Right lobe of liver (tissue), 6 donors: ENCODE measurements at regions of chr14 and their contacts with region 1.

Region 1: DNA sequence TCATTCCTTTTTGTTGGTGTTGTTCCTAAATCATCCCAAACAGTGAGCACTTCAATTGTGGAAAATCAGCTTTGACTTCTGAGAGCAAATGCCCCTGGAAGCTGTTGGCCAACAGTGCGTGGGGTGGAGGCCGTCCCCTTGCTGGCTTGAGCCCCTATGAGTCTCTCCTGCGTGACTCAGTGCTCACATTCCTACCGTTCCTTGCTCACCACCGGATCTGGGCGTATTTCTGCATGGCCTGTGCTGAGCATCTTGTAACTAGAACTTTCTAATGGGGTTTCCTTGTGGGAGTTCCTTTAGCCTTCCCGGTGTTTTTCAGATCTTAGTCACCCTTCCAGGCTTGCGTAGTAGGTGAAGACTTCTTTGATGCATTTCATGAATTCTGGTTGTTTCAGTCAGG is 14.7 kb downstream of the SERPINA1 start:
- DNase-seq: no peak
- ATAC-seq: no peak
- H3K4me3 ChIP-seq: no peak overlapping the region
- H3K27ac ChIP-seq: no peak overlapping the region
- H3K4me1 ChIP-seq: no peaks in the 10 kb centered on the region
- H3K27me3 ChIP-seq: no peaks in the 10 kb centered on the region
- CTCF ChIP-seq: no peak
- POLR2A ChIP-seq: no peak

Region 2: DNA sequence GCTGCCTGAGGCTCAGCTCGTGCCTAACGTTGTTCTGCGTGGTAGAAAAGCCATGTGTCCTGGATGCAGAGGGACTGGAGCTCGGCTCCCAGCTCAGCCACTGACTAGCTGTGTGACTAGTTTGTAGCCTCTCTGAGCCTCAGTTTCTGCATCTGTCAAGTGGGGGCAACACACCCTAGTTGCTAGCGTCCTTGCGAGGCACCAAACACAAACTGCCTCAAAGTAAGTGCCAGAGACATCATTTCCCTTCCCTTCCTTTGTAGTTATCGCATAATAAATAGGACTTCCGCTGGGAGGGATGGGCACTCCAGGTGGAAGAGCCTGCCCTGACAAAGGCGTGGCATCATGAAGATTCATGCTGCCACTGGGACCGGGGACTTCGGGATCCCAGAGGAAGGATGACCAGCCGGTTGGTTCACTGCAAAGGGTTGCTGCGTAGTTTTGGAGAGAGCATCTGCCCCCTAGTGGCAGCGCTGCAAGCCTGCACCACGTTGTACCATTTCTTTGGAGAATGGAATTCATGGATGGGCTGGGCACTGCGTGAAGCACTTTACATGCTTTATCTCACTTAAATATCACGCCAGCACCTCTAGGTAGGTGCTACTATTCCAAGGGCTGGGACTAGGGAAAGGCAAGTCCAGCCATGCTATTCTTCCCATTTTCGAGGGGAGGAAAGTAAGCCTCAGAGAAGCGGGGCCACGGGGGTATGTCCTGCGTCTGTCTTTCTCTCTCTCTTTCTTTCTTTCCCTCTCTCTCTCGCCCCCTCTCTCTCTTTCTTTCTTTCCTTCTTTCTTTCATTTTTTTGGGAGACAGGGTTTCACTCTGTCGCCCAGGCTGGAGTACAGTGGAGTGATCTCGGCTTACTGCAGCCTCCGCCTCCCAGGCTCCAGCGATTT is 372.0 kb before region 1 on chr14:
- intact Hi-C with region 1: no loop called
- DNase-seq: peak; percentile 57 to 66 (median 58)
- ATAC-seq: peak; percentile 81 to 94 (median 90)
- H3K4me3 ChIP-seq: no peak overlapping the region
- H3K27ac ChIP-seq: no peak overlapping the region
- H3K4me1 ChIP-seq: no peaks in the 10 kb centered on the region
- H3K27me3 ChIP-seq: no peaks in the 10 kb centered on the region
- CTCF ChIP-seq: peak; percentile 91 to 99 (median 98)
- POLR2A ChIP-seq: no peak

Region 3: DNA sequence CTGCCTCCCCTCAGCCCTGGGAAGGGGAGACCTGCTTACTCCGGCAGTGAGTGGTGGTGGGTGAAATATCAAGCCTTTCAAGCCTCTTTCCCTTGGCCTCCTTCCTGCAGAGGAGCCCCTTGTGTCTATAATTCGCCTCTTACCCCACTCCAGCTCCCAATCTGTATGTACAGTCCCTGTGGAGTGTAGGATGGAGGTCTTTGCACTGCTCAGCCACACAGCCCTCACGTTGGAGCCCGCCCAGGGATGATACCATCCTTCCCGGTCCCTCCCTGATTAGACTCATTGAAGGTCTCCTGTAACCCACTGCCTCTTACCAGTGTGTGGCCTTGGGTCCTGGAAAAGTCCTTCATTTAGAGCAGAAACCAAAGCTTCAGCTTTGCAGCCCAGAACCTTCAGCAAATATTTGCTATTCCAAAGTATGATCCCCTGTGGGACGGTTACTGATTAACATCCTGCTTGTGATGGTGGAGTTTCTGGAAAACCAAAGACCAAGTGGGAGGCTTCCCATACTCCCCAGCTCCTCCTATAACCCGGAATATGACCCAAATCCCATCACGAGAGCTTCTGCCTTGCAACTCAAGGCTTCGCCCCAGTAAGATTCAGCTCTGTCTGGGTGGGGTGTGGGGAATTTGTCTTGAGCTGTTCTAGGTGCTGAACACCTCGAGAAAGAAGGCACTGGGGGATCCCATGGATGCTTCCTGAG is 80.7 kb before region 1 on chr14 and contains the start of gene SERPINA10:
- intact Hi-C with region 1: loop called in 1 of 2 experiments (anchors 10 kb)
- DNase-seq: peak in 2 of 3 donors; percentile 44 to 82
- ATAC-seq: peak; percentile 56 to 80 (median 68)
- H3K4me3 ChIP-seq: peak within 1 kb of the TSS; percentile 55 to 74 (median 70)
- H3K27ac ChIP-seq: peak within 1 kb of the TSS; percentile 94 to 99 (median 99)
- H3K4me1 ChIP-seq: peaks cover 0 to 60% (median 11%) of the 10 kb centered on the region in 4 donors
- H3K27me3 ChIP-seq: no peaks in the 10 kb centered on the region
- CTCF ChIP-seq: no peak
- POLR2A ChIP-seq: peak; percentile 89
- total RNA-seq, gene SERPINA10: 114 to 400 (median 239) TPM